ENCODE measurements at regions of chr19 and their contacts with region 1.

Region 1: DNA sequence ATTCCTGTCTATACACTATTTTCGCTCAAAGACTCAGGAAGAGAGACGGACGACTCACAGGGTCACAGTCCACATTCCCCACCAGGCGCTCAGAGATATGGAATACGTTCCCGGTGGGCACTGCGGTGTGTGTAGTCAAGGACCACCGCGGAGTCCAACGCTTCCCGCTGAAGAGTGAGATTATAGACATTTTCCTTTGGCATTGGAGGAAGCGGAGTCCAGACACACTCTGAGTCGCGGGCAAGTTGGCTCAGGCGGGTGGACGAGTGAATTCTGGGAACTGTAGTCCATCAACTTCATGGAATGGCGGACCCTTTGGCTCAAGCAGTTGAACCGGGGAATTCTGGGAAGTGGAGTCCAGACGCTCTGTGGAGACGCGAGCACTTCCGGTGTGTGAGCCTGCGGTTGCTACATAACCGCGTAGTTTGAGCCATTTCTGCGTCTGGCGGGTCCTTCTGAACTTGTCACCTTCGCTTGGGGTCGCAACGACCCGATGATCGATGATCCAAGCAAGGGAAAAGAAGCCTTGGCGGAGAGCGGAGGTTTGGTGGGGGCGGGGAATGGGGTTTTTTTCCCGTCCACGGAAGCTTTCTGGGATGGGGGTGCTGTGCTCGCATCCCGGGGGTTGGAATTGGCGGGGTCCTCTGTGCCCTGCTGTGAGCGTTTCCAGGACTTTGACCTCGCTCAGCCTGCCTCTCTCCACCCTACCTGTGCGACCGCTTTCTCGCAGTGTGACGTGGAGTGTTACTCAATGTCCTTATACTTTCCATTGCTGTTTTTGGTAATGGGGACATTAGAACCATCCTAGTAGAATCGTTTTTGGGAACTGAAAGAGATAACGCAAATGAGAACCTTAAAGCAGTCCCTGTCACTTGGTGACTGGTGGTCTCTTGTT is at the start of gene ZNF230:
- DNase-seq: peak; percentile 85 to 97 (median 94)
- H3K4me3 ChIP-seq: peak within 1 kb of the TSS; percentile 59 to 98 (median 88)
- H3K27ac ChIP-seq: peak within 1 kb of the TSS in 48 of 59 donors; percentile 10 to 90 (median 67)
- H3K27me3 ChIP-seq: no peaks in the 10 kb centered on the region
- CTCF ChIP-seq: peak in 16 of 56 donors; percentile 11 to 43 (median 30)
- total RNA-seq, gene ZNF230: 2.7 to 11.5 (median 6.4) TPM

Region 2: DNA sequence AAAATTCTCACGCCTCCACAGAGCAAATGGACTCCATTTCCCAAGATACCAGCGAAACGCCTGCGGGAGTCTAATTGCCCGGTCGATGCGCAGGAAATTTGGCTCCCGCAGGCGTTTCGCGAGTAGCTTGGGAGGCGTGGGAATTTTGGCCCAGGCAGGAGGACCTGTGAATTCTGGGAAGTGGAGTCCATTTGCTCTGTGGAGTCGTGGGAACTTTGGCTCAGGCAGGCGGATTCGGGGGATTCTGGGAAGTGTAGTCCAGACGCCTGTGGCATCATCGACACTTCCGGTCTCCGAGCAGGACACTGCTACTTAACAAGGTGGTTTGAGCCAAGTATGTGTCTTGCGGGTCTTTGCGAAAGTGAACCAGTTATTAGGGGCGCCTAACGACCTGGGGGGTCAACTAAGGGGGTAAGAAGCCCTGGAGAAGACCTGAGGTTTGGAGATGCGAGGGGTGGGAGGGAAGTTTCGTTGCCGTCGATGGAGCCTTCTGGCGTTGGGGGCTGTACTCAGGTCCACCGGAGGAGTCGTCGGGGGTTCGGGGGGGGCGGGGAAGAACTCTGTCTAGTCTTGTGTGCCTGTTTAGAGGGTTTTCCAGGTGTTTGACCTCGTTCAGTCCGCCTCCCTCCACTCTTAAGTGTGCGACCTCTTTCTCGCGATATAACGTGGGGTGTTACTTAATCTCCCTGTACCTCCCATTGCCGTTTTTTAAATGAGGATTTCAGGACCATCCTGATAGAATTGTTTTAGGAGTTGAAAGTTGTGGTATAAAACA is 18.7 kb before region 1 on chr19 and contains the start of gene ZNF155:
- intact Hi-C with region 1: loop called (anchors 1 kb)
- DNase-seq: peak; percentile 88 to 97 (median 95)
- H3K4me3 ChIP-seq: peak within 1 kb of the TSS; percentile 43 to 86 (median 73)
- H3K27ac ChIP-seq: peak within 1 kb of the TSS in 42 of 59 donors; percentile 1 to 84 (median 50)
- H3K27me3 ChIP-seq: no peaks in the 10 kb centered on the region
- CTCF ChIP-seq: peak in 10 of 56 donors; percentile 5 to 35 (median 14)
- total RNA-seq, gene ZNF155: 6.7 to 16.6 (median 10.8) TPM

Region 3: GRCh38 chr19:44051654-44052402 is 49.0 kb after region 1 on chr19 and contains the start of gene ZNF223:
- intact Hi-C with region 1: loop called (anchors 1 kb)
- DNase-seq: peak; percentile 90 to 98 (median 96)
- H3K4me3 ChIP-seq: peak within 1 kb of the TSS; percentile 59 to 95 (median 83)
- H3K27ac ChIP-seq: peak within 1 kb of the TSS in 51 of 59 donors; percentile 7 to 88 (median 71)
- H3K27me3 ChIP-seq: peaks cover 0 to 17% (median 0%) of the 10 kb centered on the region in 45 donors
- CTCF ChIP-seq: peak in 21 of 56 donors; percentile 7 to 45 (median 28)
- total RNA-seq, gene ZNF223: 5.2 to 18.6 (median 10.3) TPM

Region 4: GRCh38 chr19:44083866-44084265 is 81.1 kb after region 1 on chr19:
- intact Hi-C with region 1: no loop called
- DNase-seq: no peak
- H3K4me3 ChIP-seq: no peak overlapping the region
- H3K27ac ChIP-seq: no peak overlapping the region
- H3K27me3 ChIP-seq: no peaks in the 10 kb centered on the region
- CTCF ChIP-seq: no peak

Region 5: DNA sequence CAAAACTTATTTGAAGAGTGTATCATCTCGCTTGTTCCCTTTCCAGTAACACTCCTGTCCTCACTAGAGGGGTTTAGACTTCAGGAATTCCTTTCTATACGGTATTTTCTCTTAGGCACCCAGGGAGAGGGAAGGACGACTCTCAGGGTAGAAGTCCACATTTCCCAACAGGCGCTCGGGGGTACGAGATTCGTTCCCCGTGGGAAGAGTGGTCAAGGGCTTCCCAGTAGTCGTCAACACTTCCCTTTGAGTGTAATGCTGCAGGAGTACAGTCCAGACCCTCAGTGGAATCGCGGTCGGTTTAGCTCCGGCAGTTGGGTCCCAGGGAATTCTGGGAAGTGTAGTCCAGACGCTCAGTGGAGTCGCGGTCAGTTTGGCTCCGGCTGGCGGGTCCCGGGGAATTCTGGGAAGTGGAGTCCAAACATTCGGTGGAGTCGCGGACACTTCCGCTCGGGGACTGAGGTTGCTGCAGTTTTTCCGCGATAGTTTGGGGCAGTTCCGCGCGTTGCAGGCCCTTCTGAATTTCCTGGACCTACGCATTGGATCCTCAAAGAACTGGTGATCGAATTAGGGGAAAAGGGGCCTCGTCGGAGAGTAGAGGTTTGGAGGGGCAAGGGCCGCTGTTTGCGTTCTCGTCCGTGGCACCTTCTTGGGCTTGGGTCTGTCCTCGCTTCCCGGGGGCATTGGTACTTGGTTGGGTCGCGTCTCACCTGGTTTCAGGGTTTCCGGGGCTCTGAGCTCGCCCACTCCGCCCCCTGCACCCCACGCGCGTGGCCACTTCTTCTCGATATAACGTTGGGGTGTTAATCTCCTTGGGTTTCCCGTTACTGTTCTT is 91.3 kb after region 1 on chr19 and contains the start of gene ZNF224:
- intact Hi-C with region 1: loop called (anchors 5 kb)
- DNase-seq: peak; percentile 89 to 95 (median 94)
- H3K4me3 ChIP-seq: peak within 1 kb of the TSS; percentile 53 to 96 (median 85)
- H3K27ac ChIP-seq: peak within 1 kb of the TSS in 50 of 59 donors; percentile 1 to 87 (median 68)
- H3K27me3 ChIP-seq: no peaks in the 10 kb centered on the region
- CTCF ChIP-seq: peak in 23 of 56 donors; percentile 8 to 46 (median 25)
- total RNA-seq, gene ZNF224: 25.6 to 58.3 (median 42.2) TPM

Region 6: GRCh38 chr19:44304659-44305193 is 301.9 kb after region 1 on chr19 and contains the start of gene ZNF235:
- intact Hi-C with region 1: loop called in 1 of 2 experiments (anchors 10 kb)
- DNase-seq: peak; percentile 77 to 95 (median 92)
- H3K4me3 ChIP-seq: peak within 1 kb of the TSS; percentile 63 to 99 (median 89)
- H3K27ac ChIP-seq: peak within 1 kb of the TSS in 48 of 59 donors; percentile 2 to 89 (median 60)
- H3K27me3 ChIP-seq: no peaks in the 10 kb centered on the region
- CTCF ChIP-seq: peak in 17 of 56 donors; percentile 10 to 43 (median 25)
- total RNA-seq, gene ZNF235: 8.6 to 20.5 (median 14.1) TPM

Measured in dorsolateral prefrontal cortex (tissue), 120 donors.